ENCODE measurements at regions of chr11 and their contacts with region 1.

Region 1: DNA sequence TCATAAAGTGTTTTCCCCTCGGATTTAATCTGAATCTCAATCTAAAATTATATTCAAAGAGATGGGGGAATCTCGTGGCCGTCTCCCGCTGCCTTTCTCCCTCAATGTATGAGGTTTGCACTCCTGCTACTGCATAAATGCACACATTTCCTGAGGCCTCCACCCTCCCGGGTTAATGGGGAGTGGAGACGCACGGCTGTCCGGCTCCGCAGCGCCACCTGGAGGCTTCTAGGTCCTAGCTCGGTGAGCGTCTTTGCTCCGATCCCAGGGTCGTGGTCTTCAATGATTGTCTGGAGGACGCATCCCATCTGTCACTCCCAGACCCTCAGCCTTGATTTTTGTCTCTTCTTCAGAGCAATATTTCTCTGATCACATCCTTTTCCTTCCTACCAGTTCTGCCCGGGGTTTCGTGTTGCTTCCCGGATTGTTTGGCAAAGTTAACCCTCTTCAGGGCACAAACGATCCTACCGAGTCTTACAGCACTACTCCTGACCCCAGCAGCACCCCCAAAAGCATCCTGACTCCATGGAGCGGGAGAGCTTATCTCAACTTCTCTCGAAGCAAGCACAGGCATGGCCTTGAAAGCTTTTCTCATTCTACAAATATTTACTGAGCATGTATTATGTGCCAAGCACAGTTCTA is at the start of gene LMO1:
- DNase-seq: peak; percentile 79 to 84 (median 80)
- H3K4me3 ChIP-seq: peak within 1 kb of the TSS; percentile 32 to 76 (median 65)
- H3K27ac ChIP-seq: no peak within 1 kb of the TSS
- H3K4me1 ChIP-seq: peaks cover 4 to 49% (median 43%) of the 10 kb centered on the region in 4 experiments
- H3K27me3 ChIP-seq: peaks cover 0 to 69% (median 40%) of the 10 kb centered on the region in 5 experiments

Region 2: DNA sequence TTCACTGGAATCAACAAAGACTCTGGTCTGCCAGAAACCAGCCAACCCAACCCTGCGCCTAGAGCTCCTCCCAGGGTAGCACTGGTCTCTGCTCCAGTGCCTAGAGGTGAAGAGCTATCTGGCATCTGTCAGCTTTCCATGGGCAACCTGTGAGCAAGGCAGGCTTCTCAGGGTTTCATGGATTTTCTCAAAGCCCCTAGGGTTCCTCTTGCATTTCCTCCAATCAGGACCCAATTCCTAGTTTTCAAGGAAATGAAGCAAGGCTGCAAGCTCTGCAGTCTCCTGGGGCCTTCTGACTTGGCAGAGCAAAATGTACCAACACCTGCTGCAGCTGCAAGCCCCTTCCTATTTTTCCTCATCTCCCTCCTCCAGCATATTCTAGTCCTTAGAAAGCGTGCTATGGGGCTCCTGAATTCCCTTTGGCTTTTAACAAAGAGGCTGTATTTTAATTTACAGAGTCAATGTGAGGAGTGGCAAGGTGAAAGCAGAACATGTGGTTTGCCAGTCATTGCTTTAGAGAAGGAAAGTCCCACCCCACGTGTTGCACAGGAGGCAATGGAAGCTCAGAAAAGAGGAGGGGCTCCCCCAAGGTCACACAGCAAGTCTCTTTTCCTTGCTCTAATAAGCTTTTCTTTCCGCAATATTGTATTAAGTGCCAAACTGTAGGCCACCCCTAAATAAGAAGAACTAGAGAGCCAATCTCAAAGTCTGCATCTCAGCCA is 62.1 kb before region 1 on chr11:
- CTCF ChIA-PET with region 1: interaction called, 14 read pairs
- POLR2A ChIA-PET with region 1: no interaction called
- DNase-seq: peak; percentile 61 to 90 (median 90)
- H3K4me3 ChIP-seq: peak overlapping the region in 1 of 7 experiments; percentile 9
- H3K27ac ChIP-seq: peak overlapping the region in 1 of 2 experiments; percentile 25
- H3K4me1 ChIP-seq: peaks cover 14 to 65% (median 53%) of the 10 kb centered on the region in 4 experiments
- H3K27me3 ChIP-seq: no peaks in the 10 kb centered on the region

Region 3: DNA sequence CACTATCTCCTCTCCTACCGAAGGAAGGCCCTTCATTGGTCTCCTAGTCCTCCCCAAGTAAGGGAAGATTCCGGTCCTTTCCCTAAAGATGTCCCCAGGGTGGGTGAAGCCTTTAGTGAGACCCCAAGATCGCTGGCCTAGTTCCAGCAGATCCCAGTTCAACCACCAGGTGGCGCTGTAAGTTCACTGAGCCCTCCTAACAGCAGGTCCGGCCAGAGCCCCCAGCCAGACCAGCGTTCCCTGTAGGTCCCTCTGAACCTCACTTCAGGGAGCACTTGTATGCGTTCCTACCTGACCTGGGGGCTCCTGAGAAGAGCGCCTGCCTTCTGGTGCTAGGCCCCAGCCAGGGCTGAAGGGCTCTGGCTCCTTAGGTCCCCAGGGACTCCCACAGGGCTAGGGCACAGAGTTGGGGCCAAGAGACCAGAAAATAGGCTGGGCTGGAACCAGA is 38.3 kb before region 1 on chr11:
- CTCF ChIA-PET with region 1: interaction called, 31 read pairs
- POLR2A ChIA-PET with region 1: no interaction called
- DNase-seq: peak; percentile 71 to 82 (median 71)
- H3K4me3 ChIP-seq: no peak overlapping the region
- H3K27ac ChIP-seq: no peak overlapping the region
- H3K4me1 ChIP-seq: peaks cover 0 to 18% (median 15%) of the 10 kb centered on the region in 4 experiments
- H3K27me3 ChIP-seq: peaks cover 0 to 20% (median 2%) of the 10 kb centered on the region in 5 experiments

Region 4: DNA sequence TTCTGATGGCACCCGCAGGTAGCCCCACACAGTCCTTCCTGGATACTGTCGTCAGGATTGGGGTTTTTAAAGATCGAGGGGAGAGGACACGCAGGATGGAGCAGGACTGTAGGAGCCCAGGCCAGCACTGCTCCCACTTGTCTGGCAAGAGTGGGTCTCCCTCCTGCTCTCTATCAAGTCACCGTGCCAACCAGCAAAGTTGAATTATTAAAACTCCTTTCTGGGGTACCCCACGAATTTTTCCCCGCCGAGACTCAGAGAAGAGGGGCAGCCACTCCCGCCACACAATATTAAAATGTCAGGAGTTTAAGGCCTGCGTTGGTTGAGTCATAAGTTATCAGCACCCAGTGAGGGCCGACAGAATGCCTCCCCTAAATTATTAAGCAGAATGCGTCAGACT is 10.3 kb before region 1 on chr11:
- CTCF ChIA-PET with region 1: interaction called, 99 read pairs
- POLR2A ChIA-PET with region 1: no interaction called
- DNase-seq: no peak
- H3K4me3 ChIP-seq: no peak overlapping the region
- H3K27ac ChIP-seq: no peak overlapping the region
- H3K4me1 ChIP-seq: peaks cover 0 to 16% (median 6%) of the 10 kb centered on the region in 4 experiments
- H3K27me3 ChIP-seq: no peaks in the 10 kb centered on the region

Region 5: DNA sequence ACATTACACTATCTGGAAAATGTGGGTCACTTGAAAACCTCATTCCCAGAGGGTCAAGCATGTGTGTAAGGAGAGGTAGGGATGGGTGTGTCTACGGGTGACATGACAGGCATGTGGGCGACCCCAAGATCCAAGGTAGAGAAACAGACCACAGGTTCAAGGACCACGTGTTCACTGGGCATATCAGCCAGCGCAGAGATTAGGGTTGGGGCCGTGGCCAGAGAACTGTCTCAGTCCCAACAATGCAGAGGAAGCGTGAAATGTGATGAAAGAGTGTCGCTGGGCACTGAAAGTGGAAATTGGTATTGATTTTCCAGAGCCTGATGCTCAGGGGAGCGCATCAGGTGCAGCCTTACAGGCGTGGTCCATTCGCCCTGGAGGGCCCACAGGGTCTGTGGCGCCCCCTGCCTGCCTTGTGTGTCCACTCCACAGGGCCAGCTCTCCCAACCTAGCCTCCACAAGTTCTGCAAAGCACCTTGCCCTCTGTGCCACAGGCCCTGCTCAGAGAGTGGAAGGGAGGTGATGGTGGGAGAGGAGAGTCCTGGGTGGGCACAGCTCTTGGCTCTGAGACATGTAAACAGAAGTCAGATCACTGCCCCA is 54.5 kb after region 1 on chr11:
- CTCF ChIA-PET with region 1: interaction called, 21 read pairs
- POLR2A ChIA-PET with region 1: no interaction called
- DNase-seq: peak in 1 of 3 donors; percentile 39
- H3K4me3 ChIP-seq: no peak overlapping the region
- H3K27ac ChIP-seq: no peak overlapping the region
- H3K4me1 ChIP-seq: no peaks in the 10 kb centered on the region
- H3K27me3 ChIP-seq: no peaks in the 10 kb centered on the region

Measured in common myeloid progenitor, CD34-positive (primary cell).